Heart right ventricle (tissue), 16 donors: ENCODE measurements at regions of chr7 and their contacts with region 1.

Region 1: GRCh38 chr7:135817583-135817982 is 69.0 kb upstream of the FAM180A start:
- DNase-seq: peak in 1 of 2 donors; percentile 13
- ATAC-seq: peak in 7 of 8 donors; percentile 50 to 75 (median 72)
- H3K4me3 ChIP-seq: no peak overlapping the region
- H3K27ac ChIP-seq: peak overlapping the region in 2 of 10 donors; percentile 25 to 53
- H3K4me1 ChIP-seq: no peaks in the 10 kb centered on the region
- H3K27me3 ChIP-seq: no peaks in the 10 kb centered on the region
- CTCF ChIP-seq: no peak

Region 2: DNA sequence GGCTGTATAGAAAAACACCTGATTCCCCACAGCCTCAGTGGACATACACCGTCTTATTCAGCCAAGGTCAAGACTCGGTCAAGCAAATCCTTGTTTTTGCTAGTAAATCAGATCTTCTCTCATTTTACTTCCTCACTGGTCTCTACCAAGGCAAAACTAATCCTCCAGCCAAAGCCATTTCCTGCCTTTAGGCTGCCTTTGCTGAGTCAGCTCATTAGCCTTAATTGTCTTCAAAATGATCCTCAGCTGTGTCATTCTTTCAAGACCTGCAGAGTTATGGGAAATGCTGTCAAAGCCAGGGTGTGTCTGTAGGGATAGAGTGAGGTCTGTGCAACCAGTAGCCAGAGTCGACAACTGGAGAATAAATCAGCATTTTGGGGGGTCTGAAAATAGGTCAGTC is 38.3 kb after region 1 on chr7:
- intact Hi-C with region 1: loop called in 1 of 10 experiments (anchors 5 kb)
- DNase-seq: no peak
- ATAC-seq: peak in 3 of 8 donors; percentile 25 to 47 (median 47)
- H3K4me3 ChIP-seq: no peak overlapping the region
- H3K27ac ChIP-seq: peak overlapping the region in 1 of 10 donors; percentile 13
- H3K4me1 ChIP-seq: peaks cover 0 to 12% (median 5%) of the 10 kb centered on the region in 9 donors
- H3K27me3 ChIP-seq: no peaks in the 10 kb centered on the region
- CTCF ChIP-seq: no peak

Region 3: GRCh38 chr7:136228171-136228570 is 410.6 kb after region 1 on chr7:
- intact Hi-C with region 1: no loop called
- DNase-seq: no peak
- ATAC-seq: no peak
- H3K4me3 ChIP-seq: no peak overlapping the region
- H3K27ac ChIP-seq: no peak overlapping the region
- H3K4me1 ChIP-seq: no peaks in the 10 kb centered on the region
- H3K27me3 ChIP-seq: no peaks in the 10 kb centered on the region
- CTCF ChIP-seq: no peak